ENCODE measurements at regions of chr7 and their contacts with region 1.

Region 1: DNA sequence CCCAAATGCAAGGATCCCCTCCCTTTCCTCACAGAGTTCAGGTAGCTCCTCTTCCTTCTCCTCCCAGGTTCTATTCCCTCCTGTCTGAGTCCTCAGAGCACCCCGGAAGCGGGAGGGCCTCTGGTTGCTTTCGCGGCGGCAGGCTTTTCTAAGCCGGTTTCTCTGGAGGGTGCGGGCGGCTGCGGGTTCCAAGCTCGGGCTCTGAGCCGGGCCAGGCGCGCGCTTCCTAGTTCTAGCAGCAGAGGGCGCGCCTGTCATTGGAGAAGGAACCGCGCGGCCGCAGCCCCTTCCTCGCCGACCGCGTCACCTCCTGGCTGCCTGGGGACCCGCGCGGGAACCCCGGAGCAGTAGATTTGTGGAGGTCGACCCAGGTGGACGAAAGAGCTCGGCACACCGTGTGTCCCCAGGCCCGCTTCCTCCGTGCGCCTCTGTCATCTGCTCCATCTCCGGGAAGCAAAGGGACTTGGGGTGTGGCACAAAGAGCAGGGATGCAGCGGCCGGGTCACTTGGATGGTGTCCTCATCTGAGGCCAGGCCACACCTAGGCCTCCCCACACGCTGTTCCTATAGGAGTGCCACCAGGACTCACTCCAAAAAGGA is 389.0 kb upstream of the PODXL start:
- DNase-seq: peak in 6 of 7 donors; percentile 36 to 68 (median 44)
- H3K4me3 ChIP-seq: no peak overlapping the region
- H3K27ac ChIP-seq: no peak overlapping the region
- H3K4me1 ChIP-seq: no peaks in the 10 kb centered on the region
- H3K27me3 ChIP-seq: peaks cover 17% of the 10 kb centered on the region
- CTCF ChIP-seq: peak; percentile 59 to 83 (median 76)
- POLR2A ChIP-seq: no peak

Region 2: DNA sequence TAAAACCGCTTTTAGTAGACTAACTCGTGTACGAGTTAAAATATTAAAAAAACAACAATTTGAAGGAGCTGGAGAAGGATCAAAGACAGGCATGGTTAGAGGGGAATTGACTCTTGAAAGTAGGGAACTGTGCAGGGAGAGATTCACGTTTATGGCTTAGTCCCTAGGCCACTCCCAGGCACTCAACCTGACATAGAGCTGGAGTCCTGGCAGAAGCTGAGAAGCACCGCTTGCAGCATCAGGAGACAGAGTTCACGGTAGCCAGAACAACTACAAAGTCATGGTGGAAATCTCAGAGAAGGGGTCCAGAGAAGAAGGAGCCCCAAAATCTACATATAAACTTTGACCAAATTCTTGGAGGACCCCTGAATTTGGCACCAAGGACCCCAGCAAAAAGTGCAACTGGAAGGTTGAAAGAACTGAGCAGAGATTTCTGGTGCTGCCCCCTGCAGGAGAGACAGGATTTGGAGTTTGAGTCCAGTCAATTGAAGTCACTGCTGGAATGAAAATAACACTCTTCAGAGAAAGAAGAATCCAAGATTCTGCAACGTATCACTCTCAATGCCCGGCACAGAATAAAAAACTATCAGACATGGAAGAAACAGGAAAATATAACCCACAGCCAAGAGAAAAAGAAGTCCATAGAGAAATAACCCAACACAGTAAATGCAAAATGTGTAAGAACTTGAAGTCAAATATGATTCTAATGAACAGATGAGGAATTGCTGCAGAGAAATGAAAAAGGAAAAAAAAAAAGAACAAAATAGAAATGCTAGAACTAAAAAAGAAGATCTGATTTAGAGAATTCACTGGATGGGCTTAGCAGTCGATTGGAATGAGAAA is 104.3 kb after region 1 on chr7:
- intact Hi-C with region 1: loop called in 1 of 2 experiments (anchors 5 kb)
- DNase-seq: peak in 6 of 7 donors; percentile 32 to 64 (median 56)
- H3K4me3 ChIP-seq: no peak overlapping the region
- H3K27ac ChIP-seq: no peak overlapping the region
- H3K4me1 ChIP-seq: no peaks in the 10 kb centered on the region
- H3K27me3 ChIP-seq: no peaks in the 10 kb centered on the region
- CTCF ChIP-seq: peak; percentile 31 to 64 (median 54)
- POLR2A ChIP-seq: no peak

Region 3: GRCh38 chr7:132154248-132154647 is 208.8 kb after region 1 on chr7:
- intact Hi-C with region 1: loop called in 1 of 2 experiments (anchors 10 kb)
- DNase-seq: no peak
- H3K4me3 ChIP-seq: no peak overlapping the region
- H3K27ac ChIP-seq: no peak overlapping the region
- H3K4me1 ChIP-seq: no peaks in the 10 kb centered on the region
- H3K27me3 ChIP-seq: no peaks in the 10 kb centered on the region
- CTCF ChIP-seq: no peak
- POLR2A ChIP-seq: no peak

Region 4: GRCh38 chr7:132580717-132581285 is 635.4 kb after region 1 on chr7:
- intact Hi-C with region 1: loop called (anchors 5 to 10 kb)
- DNase-seq: peak; percentile 51 to 88 (median 76)
- H3K4me3 ChIP-seq: no peak overlapping the region
- H3K27ac ChIP-seq: no peak overlapping the region
- H3K4me1 ChIP-seq: no peaks in the 10 kb centered on the region
- H3K27me3 ChIP-seq: peaks cover 9% of the 10 kb centered on the region
- CTCF ChIP-seq: peak; percentile 54 to 83 (median 74)
- POLR2A ChIP-seq: no peak